ENCODE measurements at regions of chr15 and their contacts with region 1.

Region 1: GRCh38 chr15:45402162-45402954 is 24.0 kb upstream of the GATM start:
- DNase-seq: peak; percentile 97
- ATAC-seq: peak; percentile 98

Region 2: GRCh38 chr15:44593042-44593736 is 809.2 kb before region 1 on chr15:
- intact Hi-C with region 1: no loop called
- DNase-seq: no peak
- ATAC-seq: no peak

Region 3: DNA sequence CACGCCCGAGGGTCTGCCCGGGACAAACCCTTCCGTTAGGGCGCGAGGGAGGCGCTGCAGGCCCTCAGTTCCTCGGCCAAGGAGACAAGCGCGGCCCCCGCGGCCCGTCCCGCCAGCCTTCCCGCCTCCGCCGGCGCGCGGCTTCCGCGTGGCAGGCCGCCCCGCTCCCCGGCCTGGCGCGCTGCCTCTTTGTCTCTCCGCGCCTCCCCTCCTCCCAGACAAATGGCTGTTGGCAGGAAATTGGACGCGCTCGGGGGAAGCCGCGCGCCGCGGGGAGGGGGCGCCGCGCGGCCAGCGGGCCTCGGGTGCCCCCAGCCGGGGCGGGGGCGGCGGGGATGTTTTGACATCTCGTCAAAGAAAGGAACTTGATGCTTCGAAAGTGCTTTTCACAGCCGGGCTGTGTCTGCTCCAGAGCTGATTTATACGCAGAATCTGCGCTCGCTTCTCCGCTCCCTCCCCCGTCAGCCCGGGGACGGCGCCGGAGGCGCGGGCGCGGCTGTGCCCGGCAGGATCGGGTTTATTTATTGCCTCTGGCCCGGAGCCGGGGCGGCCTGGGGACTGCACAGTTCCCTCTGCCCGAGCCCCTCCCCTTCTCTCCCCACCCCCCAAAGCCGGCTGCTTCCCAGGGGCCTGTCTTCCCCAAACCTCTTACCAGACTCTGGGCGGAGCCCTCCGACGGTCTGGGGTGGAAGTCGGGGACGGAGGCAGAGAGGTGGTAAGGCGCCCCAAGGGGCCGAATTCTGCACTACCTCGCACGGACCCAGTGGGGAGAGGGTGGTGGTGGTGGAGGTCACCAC is 235.3 kb before region 1 on chr15:
- intact Hi-C with region 1: loop called (anchors 2 kb)
- DNase-seq: peak; percentile 95
- ATAC-seq: peak; percentile 85

Region 4: GRCh38 chr15:45279024-45279698 is 123.2 kb before region 1 on chr15:
- intact Hi-C with region 1: loop called (anchors 1 kb)
- DNase-seq: peak; percentile 96
- ATAC-seq: peak; percentile 100

Region 5: DNA sequence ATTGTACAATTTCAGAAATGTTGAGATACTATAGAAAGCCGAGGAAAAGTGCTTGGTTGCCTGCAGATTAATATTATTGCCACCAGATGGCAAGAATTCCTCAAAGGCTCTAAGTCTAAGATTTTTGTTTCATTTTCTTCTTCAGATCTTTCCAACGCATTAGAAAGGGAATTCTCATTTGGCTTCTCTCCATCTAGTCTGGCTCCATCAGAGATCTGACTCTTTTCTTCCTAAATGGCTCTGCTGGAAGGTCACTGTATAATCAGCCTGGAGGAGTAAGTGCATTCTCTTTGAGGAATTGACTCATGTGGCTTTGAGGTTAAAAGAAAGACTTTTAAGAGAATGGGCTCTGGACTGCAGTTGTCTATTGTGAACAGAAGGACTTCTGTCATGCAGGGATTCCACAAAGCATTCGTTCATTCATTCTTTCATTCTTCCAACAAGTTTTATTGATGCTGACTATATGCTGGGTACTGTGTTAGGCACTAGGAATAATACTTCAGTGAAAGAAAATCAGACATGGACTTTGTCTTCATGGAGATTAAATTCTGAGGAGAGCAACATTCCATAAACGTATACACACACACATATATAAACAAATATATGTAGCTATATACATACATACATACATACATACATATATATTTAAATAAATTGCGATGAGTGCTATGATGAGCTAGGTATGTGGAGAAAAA is 95.0 kb before region 1 on chr15:
- intact Hi-C with region 1: loop called (anchors 1 kb)
- DNase-seq: no peak
- ATAC-seq: no peak

Region 6: GRCh38 chr15:45378149-45378912 is 24.0 kb before region 1 on chr15 and contains the start of gene GATM:
- intact Hi-C with region 1: loop called (anchors 2 kb)
- DNase-seq: peak; percentile 90
- ATAC-seq: peak; percentile 96
- total RNA-seq, gene GATM: 42.0 TPM

Region 7: GRCh38 chr15:45594319-45594718 is 192.0 kb after region 1 on chr15:
- intact Hi-C with region 1: no loop called
- DNase-seq: no peak
- ATAC-seq: no peak

Measured in Right ventricle myocardium inferior (tissue), 1 donor.